Activated B cell treated with CpG ODN at 0.5 μM for 24 hours (primary cell): ENCODE measurements at regions of chr1 and their contacts with region 1.

Region 1: DNA sequence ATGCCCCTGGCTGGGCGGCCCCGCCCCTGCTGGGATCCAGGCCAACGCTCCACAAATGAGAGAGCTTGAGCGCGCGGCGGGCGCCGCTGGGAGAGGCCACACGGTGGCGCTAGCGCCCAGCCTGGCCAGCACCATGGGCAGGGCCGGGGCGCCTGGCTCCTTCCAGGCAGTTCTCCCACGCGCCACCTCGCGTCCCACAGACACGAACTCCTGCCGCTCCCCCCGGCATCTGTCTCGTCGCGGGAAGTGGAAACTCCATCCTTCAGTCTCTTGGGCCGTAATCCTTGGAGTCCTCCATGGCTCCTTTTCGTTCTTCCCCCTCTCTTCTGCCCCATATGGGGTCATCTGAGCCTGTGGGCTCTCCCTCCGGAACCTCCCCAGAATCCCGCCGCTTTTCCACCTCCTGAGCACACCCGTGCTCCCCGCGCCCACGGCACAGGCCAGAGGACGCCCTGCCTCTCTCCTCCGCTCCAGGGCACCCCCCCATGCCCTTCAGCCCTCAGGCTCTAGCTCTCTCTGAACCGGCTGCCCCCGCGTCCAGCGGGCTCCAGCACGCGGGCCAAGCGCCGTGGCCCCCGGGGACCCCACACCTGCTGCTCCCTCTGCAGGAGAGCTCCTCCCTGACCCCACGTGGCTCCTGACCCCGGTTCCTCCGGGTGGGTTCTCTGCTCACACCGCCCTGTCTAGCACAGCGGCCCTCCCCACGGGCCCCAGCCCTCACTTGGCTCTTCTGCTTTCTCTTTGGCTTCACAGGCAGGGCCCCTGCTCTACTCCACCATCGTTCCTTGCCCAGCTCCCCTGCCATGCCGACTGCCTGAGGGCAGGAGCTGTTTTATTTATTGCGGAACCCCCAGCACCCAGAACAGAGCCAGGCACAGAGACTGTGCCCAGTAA is 31.9 kb upstream of the EDN2 start:
- DNase-seq: peak; percentile 74
- ATAC-seq: peak; percentile 91
- H3K4me3 Mint-ChIP-seq: peak overlapping the region; percentile 82
- H3K27ac Mint-ChIP-seq: peak overlapping the region; percentile 4
- H3K4me1 Mint-ChIP-seq: peaks cover 38% of the 10 kb centered on the region
- H3K27me3 Mint-ChIP-seq: no peaks in the 10 kb centered on the region
- CTCF ChIP-seq: peak; percentile 87

Region 2: DNA sequence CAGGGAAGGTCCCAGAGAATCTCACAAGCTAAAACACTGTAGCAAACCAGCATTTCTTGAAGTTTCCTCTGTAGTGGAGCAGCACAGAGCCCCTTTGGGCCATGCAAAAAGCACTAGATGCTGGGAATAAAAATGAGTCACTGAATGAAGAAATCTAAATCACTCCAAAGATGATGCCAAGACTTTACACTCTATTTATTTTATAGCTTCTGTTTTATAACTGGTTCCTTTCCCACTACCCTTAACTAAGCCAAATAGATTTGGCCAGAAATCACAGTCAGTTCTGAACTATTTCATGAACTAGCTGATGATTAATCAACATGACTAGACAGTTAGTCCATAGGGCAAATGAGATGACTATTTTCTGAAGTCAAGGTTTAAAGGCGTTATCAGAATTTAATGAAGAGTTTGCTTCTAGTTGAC is 363.8 kb before region 1 on chr1:
- CTCF ChIA-PET with region 1: no interaction called
- POLR2A ChIA-PET with region 1: no interaction called
- intact Hi-C with region 1: no loop called
- DNase-seq: no peak
- ATAC-seq: no peak
- H3K4me3 Mint-ChIP-seq: no peak overlapping the region
- H3K27ac Mint-ChIP-seq: no peak overlapping the region
- H3K4me1 Mint-ChIP-seq: no peaks in the 10 kb centered on the region
- H3K27me3 Mint-ChIP-seq: no peaks in the 10 kb centered on the region
- CTCF ChIP-seq: no peak

Region 3: DNA sequence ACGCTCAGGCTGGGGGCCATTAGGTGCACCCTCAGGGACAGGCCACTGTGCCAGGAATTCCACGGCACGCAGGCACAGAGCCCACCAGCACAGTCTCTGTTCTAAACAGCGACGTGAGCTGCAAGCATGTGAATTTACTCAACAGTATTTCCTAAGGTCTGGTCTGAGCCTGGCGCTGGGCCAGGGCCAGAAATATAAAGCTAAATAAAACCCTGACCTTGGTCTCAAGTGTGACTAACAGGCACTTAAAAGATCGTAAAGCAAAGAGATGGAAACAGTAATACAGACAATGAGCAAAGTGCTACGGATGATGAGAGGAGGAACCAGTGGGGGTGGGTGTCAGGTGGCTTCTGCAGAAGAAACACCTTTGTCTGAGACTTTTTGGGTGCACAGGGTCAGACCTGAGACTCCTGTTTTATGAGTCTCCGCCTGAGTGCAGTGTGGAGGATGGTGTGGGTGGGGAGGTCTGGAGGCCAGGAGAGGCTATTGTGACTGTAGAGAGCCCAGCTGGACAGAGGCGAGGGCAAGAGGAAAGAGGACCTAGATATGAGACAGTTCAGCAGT is 21.5 kb after region 1 on chr1:
- CTCF ChIA-PET with region 1: interaction called, 4 read pairs
- POLR2A ChIA-PET with region 1: interaction called, 3 read pairs
- intact Hi-C with region 1: loop called (anchors 1 kb)
- DNase-seq: peak; percentile 14
- ATAC-seq: peak; percentile 16
- H3K4me3 Mint-ChIP-seq: peak overlapping the region; percentile 68
- H3K27ac Mint-ChIP-seq: peak overlapping the region; percentile 46
- H3K4me1 Mint-ChIP-seq: peaks cover 62% of the 10 kb centered on the region
- H3K27me3 Mint-ChIP-seq: no peaks in the 10 kb centered on the region
- CTCF ChIP-seq: no peak

Region 4: GRCh38 chr1:41622859-41623723 is 106.7 kb after region 1 on chr1:
- CTCF ChIA-PET with region 1: no interaction called
- POLR2A ChIA-PET with region 1: no interaction called
- intact Hi-C with region 1: no loop called
- DNase-seq: no peak
- ATAC-seq: peak; percentile 92
- H3K4me3 Mint-ChIP-seq: peak overlapping the region; percentile 78
- H3K27ac Mint-ChIP-seq: peak overlapping the region; percentile 90
- H3K4me1 Mint-ChIP-seq: peaks cover 63% of the 10 kb centered on the region
- H3K27me3 Mint-ChIP-seq: no peaks in the 10 kb centered on the region
- CTCF ChIP-seq: no peak

Region 5: DNA sequence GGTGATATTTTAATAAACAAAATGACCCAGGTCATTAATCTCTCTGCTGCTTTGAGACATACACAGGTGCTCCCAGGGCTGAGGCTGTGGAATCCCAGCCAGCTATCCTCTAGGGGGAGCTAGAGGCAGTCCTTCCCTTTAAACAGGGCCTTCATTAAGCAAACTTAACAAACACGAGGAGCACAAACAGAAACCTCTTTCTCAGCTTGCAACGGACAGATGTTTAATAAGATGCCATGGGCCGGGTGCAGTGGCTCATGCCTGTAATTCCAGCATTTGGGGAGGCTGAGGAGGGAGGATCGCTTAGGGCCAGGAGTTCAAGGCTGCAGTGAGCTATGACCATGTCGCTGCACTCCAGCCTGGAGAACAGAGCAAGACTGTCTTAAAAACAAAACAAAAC is 295.6 kb after region 1 on chr1:
- CTCF ChIA-PET with region 1: no interaction called
- POLR2A ChIA-PET with region 1: interaction called, 3 read pairs
- intact Hi-C with region 1: loop called (anchors 5 kb)
- DNase-seq: no peak
- ATAC-seq: peak; percentile 34
- H3K4me3 Mint-ChIP-seq: no peak overlapping the region
- H3K27ac Mint-ChIP-seq: no peak overlapping the region
- H3K4me1 Mint-ChIP-seq: peaks cover 35% of the 10 kb centered on the region
- H3K27me3 Mint-ChIP-seq: no peaks in the 10 kb centered on the region
- CTCF ChIP-seq: no peak

Region 6: DNA sequence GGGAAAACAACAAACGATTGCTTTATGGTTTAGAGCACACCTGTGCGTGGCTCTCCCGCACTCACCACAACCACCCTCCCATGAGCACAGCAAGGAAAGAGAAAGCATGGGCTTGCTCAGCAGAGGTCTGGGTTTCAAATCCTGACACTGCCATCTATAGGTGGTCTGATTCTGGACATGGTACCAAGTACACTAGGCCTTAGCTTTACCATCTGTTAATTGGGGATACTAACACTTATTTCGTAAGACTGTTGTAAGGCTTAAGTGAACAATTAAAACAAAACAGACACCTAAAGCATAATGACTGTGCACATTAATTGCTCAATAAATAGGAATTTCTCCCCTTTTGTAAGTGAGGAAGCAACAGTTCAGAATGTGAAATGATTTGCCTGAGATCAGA is 352.2 kb after region 1 on chr1:
- CTCF ChIA-PET with region 1: no interaction called
- POLR2A ChIA-PET with region 1: no interaction called
- intact Hi-C with region 1: loop called (anchors 1 kb)
- DNase-seq: no peak
- ATAC-seq: peak; percentile 74
- H3K4me3 Mint-ChIP-seq: no peak overlapping the region
- H3K27ac Mint-ChIP-seq: peak overlapping the region; percentile 4
- H3K4me1 Mint-ChIP-seq: peaks cover 23% of the 10 kb centered on the region
- H3K27me3 Mint-ChIP-seq: no peaks in the 10 kb centered on the region
- CTCF ChIP-seq: no peak

Region 7: DNA sequence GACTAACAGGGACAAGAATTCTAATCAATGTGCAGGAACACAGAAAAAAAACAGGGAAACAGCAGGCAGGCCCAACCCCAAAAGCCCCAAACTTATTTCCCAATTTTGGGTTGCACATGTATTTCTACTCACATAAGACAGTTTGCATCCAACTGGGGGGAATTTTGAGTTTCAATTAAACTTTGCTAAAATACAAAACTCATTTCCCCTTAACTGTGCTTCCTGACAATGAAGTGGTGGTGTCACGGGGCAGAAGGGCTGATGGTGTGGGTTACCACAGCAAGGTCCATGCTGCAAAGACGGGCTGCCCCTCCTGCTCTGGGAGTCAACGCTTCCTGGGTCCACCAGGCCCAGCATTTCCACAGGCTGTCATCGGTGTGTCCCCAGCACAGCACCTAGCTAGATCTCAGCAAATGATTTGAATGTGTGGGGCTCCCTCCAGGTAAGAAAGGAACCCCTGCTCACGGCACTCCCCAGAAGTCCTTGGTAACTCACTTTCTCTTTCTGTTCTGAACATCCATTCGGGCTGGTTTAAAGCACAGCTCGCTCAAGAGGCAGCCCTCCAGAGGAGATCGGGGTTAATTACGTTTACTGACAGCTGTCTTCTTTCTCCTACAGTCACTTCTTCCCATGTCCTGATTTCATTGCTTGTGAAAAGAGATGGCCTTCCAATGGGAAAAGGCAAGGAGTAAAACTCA is 374.9 kb after region 1 on chr1:
- CTCF ChIA-PET with region 1: interaction called, 16 read pairs
- POLR2A ChIA-PET with region 1: interaction called, 3 read pairs
- intact Hi-C with region 1: loop called (anchors 5 kb)
- DNase-seq: peak; percentile 39
- ATAC-seq: peak; percentile 98
- H3K4me3 Mint-ChIP-seq: peak overlapping the region; percentile 83
- H3K27ac Mint-ChIP-seq: peak overlapping the region; percentile 88
- H3K4me1 Mint-ChIP-seq: peaks cover 15% of the 10 kb centered on the region
- H3K27me3 Mint-ChIP-seq: no peaks in the 10 kb centered on the region
- CTCF ChIP-seq: no peak

Region 8: GRCh38 chr1:42173155-42173933 is 656.9 kb after region 1 on chr1:
- CTCF ChIA-PET with region 1: interaction called, 54 read pairs
- POLR2A ChIA-PET with region 1: no interaction called
- intact Hi-C with region 1: loop called (anchors 1 kb)
- DNase-seq: peak; percentile 62
- ATAC-seq: peak; percentile 77
- H3K4me3 Mint-ChIP-seq: no peak overlapping the region
- H3K27ac Mint-ChIP-seq: no peak overlapping the region
- H3K4me1 Mint-ChIP-seq: no peaks in the 10 kb centered on the region
- H3K27me3 Mint-ChIP-seq: no peaks in the 10 kb centered on the region
- CTCF ChIP-seq: peak; percentile 47

Region 9: DNA sequence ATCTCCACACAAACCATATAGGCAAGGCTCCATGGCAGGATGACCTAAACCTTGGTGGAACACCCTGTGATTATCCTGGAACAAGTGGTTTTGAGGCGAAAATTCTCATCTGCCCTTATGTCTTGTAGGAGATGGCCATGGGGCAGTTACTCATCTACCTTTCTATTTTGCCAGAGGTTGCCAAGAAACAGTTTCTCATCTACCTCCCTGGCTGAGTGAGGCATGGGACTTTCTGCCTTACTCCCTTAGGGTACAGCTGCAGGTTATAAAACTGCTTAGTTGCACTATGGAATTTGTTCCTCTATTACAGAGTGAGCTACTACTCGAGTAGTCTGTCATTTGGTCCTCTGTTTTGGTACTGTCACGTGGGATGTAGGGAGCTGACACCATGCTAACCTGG is 679.4 kb after region 1 on chr1:
- CTCF ChIA-PET with region 1: no interaction called
- POLR2A ChIA-PET with region 1: no interaction called
- intact Hi-C with region 1: no loop called
- DNase-seq: no peak
- ATAC-seq: no peak
- H3K4me3 Mint-ChIP-seq: no peak overlapping the region
- H3K27ac Mint-ChIP-seq: no peak overlapping the region
- H3K4me1 Mint-ChIP-seq: no peaks in the 10 kb centered on the region
- H3K27me3 Mint-ChIP-seq: no peaks in the 10 kb centered on the region
- CTCF ChIP-seq: no peak